ENCODE measurements at regions of chr16 and their contacts with region 1.

Region 1: DNA sequence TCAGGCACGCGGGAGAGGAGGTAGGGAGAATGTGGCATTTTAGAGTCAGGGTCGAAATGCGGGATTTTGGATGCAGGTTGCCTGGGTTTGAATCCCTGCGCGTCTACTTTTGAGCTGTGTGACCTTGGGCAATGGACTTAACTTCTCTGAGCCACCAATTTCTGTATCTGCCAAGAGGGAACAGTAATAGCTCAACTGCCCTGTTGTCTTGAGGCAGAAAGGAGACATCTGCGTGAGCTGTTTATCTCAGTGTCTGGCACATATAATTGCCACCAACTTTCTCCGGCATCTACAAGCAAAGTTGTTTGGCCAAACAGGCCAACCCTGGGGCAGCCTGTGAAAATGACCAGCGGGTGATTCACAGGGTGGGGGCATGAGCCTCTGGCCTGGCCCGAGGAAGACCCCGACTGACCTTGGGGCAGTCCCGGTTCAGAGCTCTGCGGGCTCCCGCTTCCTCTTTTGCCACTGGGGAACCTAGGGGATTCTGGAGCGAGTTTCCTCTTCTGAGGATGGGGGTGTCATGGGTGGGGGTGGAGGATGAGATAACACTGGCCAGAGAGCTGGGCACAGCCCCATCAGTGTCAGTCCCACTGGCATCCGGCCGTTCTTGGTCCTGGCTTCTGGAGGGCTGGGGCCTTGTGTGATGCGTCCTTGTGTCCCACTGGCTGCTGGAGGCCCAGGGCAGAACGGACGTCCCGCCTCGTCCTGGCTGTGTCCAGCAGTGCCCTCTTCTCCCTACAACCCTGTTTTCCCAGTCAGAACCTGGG is 1.3 kb downstream of the SNN start:
- DNase-seq: no peak
- H3K4me3 ChIP-seq: peak overlapping the region; percentile 77
- CTCF ChIP-seq: no peak

Region 2: GRCh38 chr16:11742539-11743307 is 73.2 kb after region 1 on chr16 and contains the start of gene TXNDC11:
- in situ Hi-C with region 1: loop called (anchors 5 kb)
- DNase-seq: peak; percentile 92
- H3K4me3 ChIP-seq: peak within 1 kb of the TSS; percentile 91
- CTCF ChIP-seq: no peak

Region 3: GRCh38 chr16:11757671-11758545 is 88.3 kb after region 1 on chr16:
- in situ Hi-C with region 1: no loop called
- DNase-seq: peak; percentile 86
- H3K4me3 ChIP-seq: no peak overlapping the region
- CTCF ChIP-seq: peak; percentile 7

Measured in astrocyte of the cerebellum (primary cell).